Ovary (tissue), 10 donors: ENCODE measurements at regions of chr6 and their contacts with region 1.

Region 1: DNA sequence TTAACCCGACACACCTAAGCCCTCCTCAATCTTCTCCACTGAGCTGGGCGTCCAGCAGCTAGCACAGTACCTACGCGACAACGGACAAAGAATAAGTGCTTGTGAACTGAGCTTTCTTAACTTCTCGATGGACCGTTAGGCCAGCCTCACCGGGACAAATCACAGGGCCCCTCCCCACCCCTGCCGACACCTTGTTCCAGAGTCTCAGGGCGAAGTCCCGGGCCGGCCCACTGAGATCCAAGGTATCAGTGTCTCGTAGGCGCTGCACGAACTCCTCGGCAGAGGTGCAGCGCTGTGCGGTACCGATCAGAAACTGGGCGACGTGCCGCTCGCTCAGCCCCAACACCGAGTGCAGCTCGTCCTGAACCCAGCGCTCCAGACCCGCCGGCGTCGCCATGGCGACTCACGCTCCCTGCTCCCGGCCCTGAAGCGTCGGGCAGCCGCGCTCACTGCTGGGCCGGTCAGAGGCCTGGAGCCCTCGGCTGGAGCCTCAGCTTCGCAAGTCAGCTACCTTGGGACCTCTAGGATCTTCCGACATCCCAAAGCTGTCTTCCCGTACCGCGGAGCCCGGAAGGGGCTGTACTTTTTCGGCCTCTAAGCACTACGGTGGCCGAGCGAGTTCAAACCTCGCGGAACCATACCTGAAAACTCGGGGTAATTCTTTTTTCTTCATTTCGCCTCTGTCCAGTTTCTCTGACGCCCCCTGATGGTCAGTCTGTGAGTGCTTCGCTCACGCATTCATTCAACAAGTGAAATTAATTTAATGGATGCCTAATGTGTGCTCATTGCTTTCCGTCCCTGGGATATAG is at the start of gene DHX16:
- DNase-seq: peak; percentile 94 to 97 (median 96)
- H3K4me3 ChIP-seq: peak within 1 kb of the TSS; percentile 100
- H3K27ac ChIP-seq: peak within 1 kb of the TSS in 1 of 2 donors; percentile 35
- H3K4me1 ChIP-seq: peaks cover 4% of the 10 kb centered on the region
- H3K27me3 ChIP-seq: no peaks in the 10 kb centered on the region
- CTCF ChIP-seq: peak; percentile 85 to 89 (median 88)
- EP300 ChIP-seq: no peak
- POLR2A ChIP-seq: peak; percentile 18
- total RNA-seq, gene DHX16: 18.0 to 27.4 (median 22.5) TPM

Region 2: DNA sequence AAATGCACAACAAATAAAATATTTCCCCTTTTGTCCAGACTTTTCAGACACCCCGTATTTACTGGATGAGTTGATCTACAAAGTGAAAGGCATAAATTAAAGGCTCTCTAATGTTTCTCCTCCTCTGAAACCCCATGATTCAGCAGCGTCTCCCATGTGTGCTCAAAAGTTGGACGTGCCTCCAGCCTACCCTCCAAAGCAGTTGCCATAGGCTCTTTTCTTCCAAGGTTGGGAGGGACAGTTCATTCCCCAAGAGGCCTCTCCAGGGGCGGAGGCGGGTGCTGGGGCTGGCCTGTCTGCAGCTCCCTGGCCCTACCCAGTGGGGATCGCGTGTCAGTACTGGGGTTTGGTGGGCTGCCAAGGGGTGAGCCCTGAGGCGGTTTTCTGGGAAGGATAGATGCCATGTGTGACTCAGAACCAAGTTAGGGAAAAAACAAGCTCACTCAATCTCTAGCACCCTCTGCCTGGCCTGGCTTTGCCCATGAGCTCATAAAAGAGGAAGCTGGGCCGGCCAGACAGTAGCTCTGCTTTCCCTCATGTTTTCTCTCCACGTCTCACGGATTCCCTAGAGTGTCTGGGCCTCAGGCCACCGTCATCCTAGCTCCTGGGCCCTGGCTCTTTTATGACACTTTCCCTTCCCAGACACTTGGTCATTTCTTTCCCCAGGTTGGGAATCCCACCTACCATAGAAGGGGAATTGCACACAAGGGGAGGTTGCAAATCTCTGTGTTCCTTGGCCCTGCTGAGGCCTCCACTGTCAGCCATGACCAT is 79.7 kb after region 1 on chr6:
- intact Hi-C with region 1: no loop called
- DNase-seq: peak; percentile 74 to 94 (median 91)
- H3K4me3 ChIP-seq: no peak overlapping the region
- H3K27ac ChIP-seq: peak overlapping the region in 1 of 2 donors; percentile 80
- H3K4me1 ChIP-seq: peaks cover 18% of the 10 kb centered on the region
- H3K27me3 ChIP-seq: no peaks in the 10 kb centered on the region
- CTCF ChIP-seq: no peak
- EP300 ChIP-seq: no peak
- POLR2A ChIP-seq: no peak

Region 3: GRCh38 chr6:31020057-31020456 is 347.4 kb after region 1 on chr6:
- intact Hi-C with region 1: no loop called
- DNase-seq: no peak
- H3K4me3 ChIP-seq: no peak overlapping the region
- H3K27ac ChIP-seq: no peak overlapping the region
- H3K4me1 ChIP-seq: no peaks in the 10 kb centered on the region
- H3K27me3 ChIP-seq: no peaks in the 10 kb centered on the region
- CTCF ChIP-seq: no peak
- EP300 ChIP-seq: no peak
- POLR2A ChIP-seq: no peak

Region 4: DNA sequence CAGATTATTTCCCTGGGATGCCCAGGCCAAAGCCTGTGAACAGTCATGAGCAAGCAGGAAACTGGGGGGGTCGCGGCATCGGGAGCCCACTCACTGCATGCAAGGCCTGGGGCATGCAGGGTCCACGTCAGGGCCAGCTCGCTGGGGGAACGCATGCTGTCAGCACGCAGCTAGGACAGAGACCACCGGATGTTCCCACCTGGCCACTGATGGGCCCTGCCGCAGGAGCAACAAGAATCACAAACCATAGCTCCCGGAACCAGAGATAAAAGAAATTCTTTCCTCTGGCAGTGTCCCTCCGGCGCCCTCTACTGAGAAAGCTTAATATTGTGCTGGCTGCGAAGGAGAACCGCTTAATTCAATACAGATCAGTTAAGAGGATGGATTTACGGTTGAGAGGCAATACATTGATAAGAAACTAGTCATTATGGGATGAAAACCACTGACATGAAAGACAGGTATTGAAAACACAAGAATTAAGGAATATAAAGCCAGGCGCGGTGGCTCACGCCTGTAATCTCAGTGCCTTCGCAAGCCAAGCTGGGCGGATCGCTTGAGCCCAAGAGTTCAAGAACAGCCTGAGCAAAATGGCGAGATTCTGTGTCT is 407.1 kb after region 1 on chr6:
- intact Hi-C with region 1: loop called in 1 of 4 experiments (anchors 10 kb)
- DNase-seq: peak; percentile 52 to 75 (median 67)
- H3K4me3 ChIP-seq: no peak overlapping the region
- H3K27ac ChIP-seq: no peak overlapping the region
- H3K4me1 ChIP-seq: peaks cover 3% of the 10 kb centered on the region
- H3K27me3 ChIP-seq: no peaks in the 10 kb centered on the region
- CTCF ChIP-seq: peak; percentile 68 to 79 (median 71)
- EP300 ChIP-seq: no peak
- POLR2A ChIP-seq: no peak

Region 5: DNA sequence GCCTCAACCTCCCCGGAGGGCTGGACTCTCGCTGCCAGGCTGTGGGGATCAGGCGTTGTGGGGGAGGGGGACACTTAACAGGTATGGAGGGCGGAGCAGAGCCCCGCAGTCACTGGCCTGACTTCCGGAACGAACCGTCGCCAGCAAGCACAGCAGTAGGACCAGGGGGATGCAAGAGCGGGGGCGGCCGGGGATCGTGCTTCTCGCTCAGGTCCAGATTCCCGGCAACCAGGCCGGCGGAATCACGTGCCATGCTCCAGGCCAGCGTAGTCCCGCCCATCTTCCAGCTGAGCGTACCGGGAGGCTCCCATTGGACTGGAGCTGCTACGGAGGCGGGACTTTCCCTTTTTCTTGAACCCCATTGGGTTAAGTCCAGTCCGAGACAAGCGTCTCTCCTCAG is 507.9 kb after region 1 on chr6:
- intact Hi-C with region 1: no loop called
- DNase-seq: peak; percentile 69 to 85 (median 74)
- H3K4me3 ChIP-seq: peak overlapping the region; percentile 20
- H3K27ac ChIP-seq: no peak overlapping the region
- H3K4me1 ChIP-seq: no peaks in the 10 kb centered on the region
- H3K27me3 ChIP-seq: no peaks in the 10 kb centered on the region
- CTCF ChIP-seq: no peak
- EP300 ChIP-seq: no peak
- POLR2A ChIP-seq: no peak